HepG2 (cell line): ENCODE measurements at regions of chr9 and their contacts with region 1.

Region 1: DNA sequence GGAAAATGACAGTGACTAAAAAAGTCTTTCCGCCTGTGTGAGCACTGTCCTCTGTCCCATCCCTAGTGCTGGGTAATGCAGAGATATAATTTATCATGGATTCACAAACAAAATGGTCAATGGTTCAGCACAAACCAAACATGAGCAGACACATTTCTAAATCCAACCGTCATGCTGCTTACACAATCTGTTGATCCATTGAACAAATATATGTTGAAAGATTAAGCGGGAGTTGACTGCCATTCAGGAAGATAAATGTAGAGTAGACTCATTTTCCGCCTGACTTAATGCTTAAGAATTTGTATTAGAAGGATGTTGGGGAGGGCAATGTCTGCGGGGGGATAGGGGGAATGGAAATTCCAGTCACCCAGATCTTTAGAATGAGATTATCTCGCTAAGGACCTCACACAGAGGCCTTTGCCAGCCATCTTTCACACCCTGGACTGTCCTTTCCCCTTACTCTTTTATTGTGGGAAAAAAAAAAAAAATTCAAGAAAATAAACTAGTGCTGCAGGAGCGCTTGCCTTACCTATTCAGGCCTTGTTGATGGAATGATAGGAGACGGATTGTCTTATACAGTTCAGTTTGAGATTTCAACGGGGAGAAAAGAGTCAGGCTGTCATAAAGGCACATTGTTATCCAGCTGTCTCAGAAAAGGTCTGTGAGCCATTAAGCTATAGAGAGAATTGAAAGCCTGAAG is 153.7 kb downstream of the TLE1 start:
- DNase-seq: peak; percentile 99
- ATAC-seq: peak; percentile 98
- H3K4me3 ChIP-seq: no peak overlapping the region
- H3K27ac ChIP-seq: peak overlapping the region; percentile 56
- H3K4me1 ChIP-seq: peaks cover 58% of the 10 kb centered on the region
- H3K27me3 ChIP-seq: no peaks in the 10 kb centered on the region
- CTCF ChIP-seq: no peak
- EP300 ChIP-seq: peak; percentile 90 to 99
- POLR2A ChIP-seq: no peak
- RAD21 ChIP-seq: no peak

Region 2: DNA sequence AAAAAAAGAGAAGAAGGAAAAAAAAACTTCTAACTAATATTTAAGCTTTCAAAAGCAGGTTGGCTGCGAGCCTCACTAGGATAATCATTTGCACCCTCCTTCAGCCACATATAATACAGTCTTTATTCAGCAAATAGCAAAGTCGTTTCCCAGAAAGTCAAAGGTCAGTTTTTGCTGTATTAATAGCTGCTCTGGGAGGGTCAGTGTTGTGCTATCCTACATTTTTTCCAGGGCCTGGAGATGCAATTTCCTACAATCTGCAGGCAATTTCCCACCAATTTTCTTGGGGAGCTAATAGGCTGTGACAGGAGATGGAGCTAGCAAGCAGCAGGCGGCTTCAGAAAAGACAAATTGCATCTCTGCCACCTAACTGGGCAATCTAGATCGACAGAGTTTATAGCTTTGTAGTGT is 16.9 kb after region 1 on chr9:
- CTCF ChIA-PET with region 1: no interaction called
- POLR2A ChIA-PET with region 1: no interaction called
- in situ Hi-C with region 1: no loop called
- intact Hi-C with region 1: loop called (anchors 2 kb)
- DNase-seq: peak; percentile 65
- ATAC-seq: peak; percentile 75
- H3K4me3 ChIP-seq: no peak overlapping the region
- H3K27ac ChIP-seq: no peak overlapping the region
- H3K4me1 ChIP-seq: peaks cover 70% of the 10 kb centered on the region
- H3K27me3 ChIP-seq: no peaks in the 10 kb centered on the region
- CTCF ChIP-seq: no peak; the same call in 1 of the 2 replicates
- EP300 ChIP-seq: no peak
- POLR2A ChIP-seq: no peak
- RAD21 ChIP-seq: no peak

Region 3: DNA sequence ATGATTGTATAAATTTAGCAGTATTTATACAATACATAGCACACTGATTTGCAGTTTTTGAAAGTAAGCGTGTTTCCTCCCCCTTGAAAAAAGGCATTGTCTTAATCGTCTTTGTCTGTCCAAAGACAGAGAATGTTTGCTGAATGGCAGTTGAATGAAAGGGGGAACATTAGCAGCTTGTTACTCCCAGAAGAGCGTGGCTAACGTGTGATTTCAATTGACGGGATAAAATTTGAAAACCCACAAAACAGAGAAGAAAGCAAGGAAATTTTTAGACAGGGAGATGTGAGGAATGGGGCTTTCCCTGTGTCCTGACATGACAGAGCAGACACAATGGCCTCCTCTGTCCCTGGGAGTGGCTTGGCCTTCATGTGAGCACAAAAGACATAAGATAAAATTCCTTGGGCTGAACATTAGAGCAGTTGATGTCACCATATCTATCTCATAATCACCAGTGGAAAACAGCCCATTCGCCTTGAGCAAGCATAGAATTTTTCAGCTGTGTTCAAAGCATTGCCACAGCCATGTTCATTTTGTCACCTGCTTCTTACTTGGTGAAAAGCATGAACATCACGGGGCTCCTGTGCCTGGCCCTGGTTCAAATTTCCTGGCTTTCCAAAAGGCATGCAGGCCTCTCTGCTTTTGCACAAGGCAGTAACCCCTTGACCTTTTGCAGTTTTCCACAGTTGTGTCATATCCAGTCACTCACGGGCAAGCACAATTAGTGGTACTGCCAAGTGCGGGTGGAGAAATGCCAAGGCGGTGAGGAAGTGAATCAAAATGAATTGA is 26.7 kb after region 1 on chr9:
- CTCF ChIA-PET with region 1: no interaction called
- POLR2A ChIA-PET with region 1: no interaction called
- in situ Hi-C with region 1: no loop called
- intact Hi-C with region 1: loop called (anchors 1 kb)
- DNase-seq: peak; percentile 73
- ATAC-seq: peak; percentile 67
- H3K4me3 ChIP-seq: no peak overlapping the region
- H3K27ac ChIP-seq: no peak overlapping the region
- H3K4me1 ChIP-seq: peaks cover 56% of the 10 kb centered on the region
- H3K27me3 ChIP-seq: no peaks in the 10 kb centered on the region
- CTCF ChIP-seq: no peak
- EP300 ChIP-seq: no peak
- POLR2A ChIP-seq: no peak
- RAD21 ChIP-seq: no peak